ENCODE measurements at regions of chr5 and their contacts with region 1.

Region 1: DNA sequence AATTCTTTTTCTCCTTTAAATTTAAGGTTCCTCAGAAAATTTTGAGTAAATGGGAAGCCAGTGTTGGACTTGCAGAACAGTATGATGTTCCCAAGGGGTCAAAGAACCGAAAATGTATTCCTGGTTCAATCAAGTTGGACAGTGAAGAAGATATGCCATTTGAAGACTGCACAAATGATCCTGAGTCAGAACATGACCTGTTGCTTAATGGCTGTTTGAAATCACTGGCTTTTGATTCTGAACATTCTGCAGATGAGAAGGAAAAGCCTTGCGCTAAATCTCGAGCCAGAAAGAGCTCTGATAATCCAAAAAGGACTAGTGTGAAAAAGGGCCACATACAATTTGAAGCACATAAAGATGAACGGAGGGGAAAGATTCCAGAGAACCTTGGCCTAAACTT is 76.0 kb downstream of the NSD1 start:
- DNase-seq: no peak
- ATAC-seq: no peak

Region 2: GRCh38 chr5:176875783-176876505 is 333.7 kb before region 1 on chr5:
- intact Hi-C with region 1: no loop called
- DNase-seq: no peak
- ATAC-seq: no peak

Region 3: GRCh38 chr5:177133091-177133852 is 76.3 kb before region 1 on chr5 and contains the start of gene NSD1:
- intact Hi-C with region 1: loop called in 1 of 2 experiments (anchors 10 kb)
- DNase-seq: peak; percentile 91
- ATAC-seq: peak; percentile 82 to 85
- total RNA-seq, gene NSD1: 40.6 to 44.2 TPM

Measured in left cardiac atrium (tissue), 4 donors.